RWPE1 (cell line): ENCODE measurements at regions of chr6 and their contacts with region 1.

Region 1: DNA sequence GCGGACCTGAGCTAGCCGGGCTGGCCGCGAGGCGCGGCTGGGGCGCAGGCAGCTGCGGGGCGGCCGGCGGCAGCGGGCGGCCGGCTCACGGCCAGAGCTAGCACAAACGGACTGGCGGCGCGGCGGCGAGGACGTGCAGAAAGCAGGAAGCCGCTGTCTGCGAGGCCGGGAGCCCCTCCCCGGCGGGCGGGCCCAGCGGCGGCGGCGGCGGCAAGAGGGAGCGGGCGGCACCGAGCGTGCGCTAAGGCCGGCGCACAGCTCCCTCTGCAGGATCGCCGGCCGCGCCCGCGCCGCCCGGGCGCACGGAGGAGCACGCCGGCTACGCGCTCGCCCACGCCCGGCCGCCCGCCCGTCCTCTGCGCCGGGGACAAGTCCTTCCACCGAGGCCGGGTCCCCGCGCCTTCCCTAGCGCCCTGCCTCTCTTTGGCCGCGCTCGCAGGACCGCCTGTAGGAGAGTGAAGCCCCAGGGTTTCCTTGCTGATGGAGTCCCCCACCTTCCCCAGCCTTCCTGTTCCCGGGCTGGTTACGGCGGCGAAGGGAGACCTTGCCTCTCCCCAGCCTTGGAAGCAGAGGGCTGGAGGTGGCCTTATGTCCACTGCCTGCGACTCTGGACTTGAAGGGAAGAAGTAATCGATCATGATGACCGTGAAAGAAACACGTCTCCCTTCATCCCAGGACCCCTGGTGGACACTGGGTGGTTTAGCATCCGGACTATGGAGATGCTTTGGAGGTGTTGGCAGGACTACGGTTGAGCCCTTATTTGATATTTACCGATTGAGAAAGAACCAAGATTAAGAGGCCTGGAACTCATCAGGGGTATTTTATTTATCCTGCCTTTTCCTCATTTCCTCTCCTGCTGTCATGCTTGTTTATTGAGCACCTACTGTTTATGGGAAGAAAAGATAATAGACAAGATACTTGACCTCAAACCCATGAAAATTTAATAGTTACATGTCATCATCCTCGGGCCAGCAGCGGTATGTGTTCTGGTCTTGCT is at the start of gene PREP:
- DNase-seq: peak; percentile 83
- H3K27ac ChIP-seq: peak within 1 kb of the TSS; percentile 83
- CTCF ChIP-seq: peak; percentile 84

Region 2: DNA sequence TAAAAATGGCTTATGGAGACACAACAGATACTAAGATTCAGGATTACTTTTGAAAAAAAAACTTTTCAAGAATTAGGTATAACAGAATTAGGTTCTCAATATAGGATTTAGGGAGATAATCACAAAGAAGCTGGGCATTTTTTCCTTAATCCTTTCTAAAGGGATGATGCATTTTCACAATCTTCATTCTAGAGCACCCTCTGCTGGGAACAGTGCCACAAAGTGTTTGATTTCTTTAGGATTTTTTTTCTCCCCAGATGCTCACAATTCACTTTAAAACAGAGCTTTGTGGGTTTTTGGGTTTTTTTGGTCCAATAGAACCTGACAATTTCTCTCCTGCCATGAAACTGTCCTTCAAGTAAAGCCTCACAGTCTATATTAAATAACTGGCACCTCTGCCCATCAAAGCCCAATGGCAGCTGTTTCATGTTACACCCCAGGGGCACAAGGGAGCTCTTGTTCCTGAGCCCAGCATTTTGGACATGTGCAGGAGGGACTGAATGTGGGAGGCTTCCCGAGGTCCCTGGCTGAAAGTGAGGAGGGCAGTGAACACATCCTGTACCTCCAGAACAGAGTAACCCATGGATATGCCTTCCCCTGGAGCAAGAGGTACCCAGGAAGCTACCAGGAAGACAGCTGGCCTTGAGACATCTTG is 40.0 kb before region 1 on chr6:
- CTCF ChIA-PET with region 1: interaction called, 10 read pairs
- POLR2A ChIA-PET with region 1: interaction called, 3 read pairs
- DNase-seq: no peak
- H3K27ac ChIP-seq: peak overlapping the region; percentile 84
- CTCF ChIP-seq: peak; percentile 26

Region 3: DNA sequence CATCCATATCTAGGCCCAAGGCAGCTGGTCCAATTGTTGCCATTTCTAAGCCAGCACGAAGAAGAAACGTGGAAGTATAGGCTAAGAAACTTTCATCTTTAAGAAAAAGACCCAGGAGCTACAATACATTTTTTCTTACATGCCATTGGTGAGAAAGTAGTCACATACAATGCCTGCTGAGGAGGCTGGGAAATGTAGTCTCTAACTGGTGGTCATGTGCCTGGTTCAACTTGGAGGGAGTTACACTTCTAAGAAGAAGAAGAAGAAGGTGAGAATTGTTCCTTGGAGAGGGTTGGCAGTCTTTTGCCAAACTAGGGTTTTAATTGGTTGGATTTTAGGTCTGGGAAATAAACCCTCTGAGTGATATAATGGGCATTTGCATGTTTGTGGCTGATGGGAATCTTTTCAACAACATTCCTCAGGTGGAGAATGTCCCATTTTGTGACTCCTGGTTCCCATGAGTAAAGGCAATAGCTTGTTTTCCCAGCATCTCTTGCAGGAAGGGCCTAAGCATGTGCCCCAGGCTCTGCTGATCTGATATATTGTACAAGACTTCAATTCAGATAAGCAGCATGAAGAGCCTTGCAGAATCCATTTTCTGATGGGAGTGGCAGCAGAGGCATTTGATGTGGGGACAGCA is 46.6 kb after region 1 on chr6:
- CTCF ChIA-PET with region 1: no interaction called
- POLR2A ChIA-PET with region 1: no interaction called
- DNase-seq: no peak
- H3K27ac ChIP-seq: no peak overlapping the region
- CTCF ChIP-seq: no peak